WTC11 (cell line): ENCODE measurements at regions of chr12 and their contacts with region 1.

Region 1: GRCh38 chr12:57726151-57726883 is 12.2 kb downstream of the AGAP2 start:
- DNase-seq: peak; percentile 92
- ATAC-seq: peak; percentile 89
- H3K4me3 Mint-ChIP-seq: peak overlapping the region; percentile 94
- H3K27ac Mint-ChIP-seq: no peak overlapping the region
- H3K4me1 Mint-ChIP-seq: peaks cover 15% of the 10 kb centered on the region
- H3K27me3 Mint-ChIP-seq: peaks cover 87% of the 10 kb centered on the region
- CTCF ChIP-seq: peak; percentile 40; the same call in 1 of the 2 replicates

Region 2: DNA sequence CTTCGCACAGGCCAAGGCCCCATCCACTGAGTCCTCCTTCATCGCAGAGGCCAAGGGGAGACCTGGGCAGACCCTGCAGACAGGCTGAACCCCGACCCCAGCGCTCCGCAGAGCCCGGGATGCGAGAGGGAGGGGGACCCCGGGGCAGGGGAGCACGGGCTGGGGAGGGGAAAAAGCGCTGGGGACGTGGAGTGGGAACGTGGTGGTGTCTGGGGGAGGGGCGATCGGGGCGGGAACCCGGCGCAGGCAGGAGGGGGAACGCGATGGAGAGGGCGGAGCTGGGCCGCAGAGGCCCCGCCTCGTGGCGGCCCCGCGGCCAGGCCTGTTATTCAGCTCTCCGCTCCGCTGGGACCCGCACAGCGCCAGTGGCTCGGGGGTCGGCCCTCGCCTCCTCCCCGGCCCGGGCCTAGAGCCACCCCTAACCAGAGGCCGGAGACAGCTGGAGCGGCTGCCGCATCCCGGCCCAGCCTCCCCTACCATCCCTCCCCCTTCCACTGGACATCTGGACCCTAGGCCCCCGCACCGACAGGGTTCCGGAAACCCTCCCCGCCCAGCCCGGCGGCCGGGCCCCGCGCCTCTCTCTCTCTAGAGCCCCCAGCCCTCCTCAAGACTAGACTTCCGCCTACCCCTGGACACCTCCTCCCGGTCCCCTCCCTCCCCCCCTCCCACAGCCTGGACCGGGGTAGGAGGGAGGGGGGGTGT is 115.1 kb before region 1 on chr12 and contains the start of gene ARHGEF25:
- CTCF ChIA-PET with region 1: interaction called, 12 read pairs
- POLR2A ChIA-PET with region 1: no interaction called
- DNase-seq: peak; percentile 73
- ATAC-seq: peak; percentile 67
- H3K4me3 Mint-ChIP-seq: peak within 1 kb of the TSS; percentile 87
- H3K27ac Mint-ChIP-seq: no peak within 1 kb of the TSS
- H3K4me1 Mint-ChIP-seq: peaks cover 36% of the 10 kb centered on the region
- H3K27me3 Mint-ChIP-seq: peaks cover 53% of the 10 kb centered on the region
- CTCF ChIP-seq: no peak
- total RNA-seq, gene ARHGEF25: 11.9 to 19.0 TPM (median 17.2 TPM) in 3 replicates

Region 3: DNA sequence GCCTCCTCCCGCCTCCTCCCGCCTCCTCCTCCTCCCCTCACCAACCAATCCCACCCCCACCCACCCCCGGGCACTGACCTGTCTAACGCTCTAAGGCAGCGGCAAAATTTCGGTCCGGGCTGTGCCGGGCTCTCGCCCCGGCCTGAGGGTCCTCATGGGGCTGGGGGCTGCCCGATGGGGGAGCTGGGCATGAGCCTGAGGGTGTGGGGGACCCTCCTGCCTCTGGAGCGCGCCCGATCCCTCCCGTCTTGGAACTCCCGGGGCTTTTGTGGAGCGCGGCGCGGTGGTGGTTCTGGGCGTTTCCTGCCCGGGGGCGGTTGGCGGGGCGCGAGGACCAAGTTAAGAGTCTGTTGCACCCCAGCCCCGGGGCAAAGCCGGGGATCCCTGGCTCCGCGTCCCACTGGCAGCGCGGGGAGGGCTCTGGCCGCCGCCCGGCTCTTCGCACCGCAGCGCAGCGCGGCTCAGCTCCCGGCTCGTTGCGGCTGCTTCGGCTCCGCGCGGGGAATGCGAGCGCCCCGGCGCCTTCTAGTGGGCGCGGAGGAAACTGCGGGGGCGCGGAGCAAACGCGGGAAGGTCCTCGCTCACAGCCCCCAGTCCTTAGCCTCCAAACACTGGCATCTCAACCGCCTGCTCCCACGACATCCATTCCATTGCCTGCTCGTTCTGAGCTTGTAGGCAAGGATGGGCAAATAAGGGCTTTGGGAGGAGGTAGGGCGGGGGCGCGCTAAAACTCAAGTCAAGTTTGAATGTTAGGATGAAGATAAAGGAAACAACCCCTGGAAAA is 93.4 kb before region 1 on chr12 and contains the start of gene B4GALNT1:
- CTCF ChIA-PET with region 1: interaction called, 17 read pairs
- POLR2A ChIA-PET with region 1: no interaction called
- DNase-seq: peak; percentile 77
- ATAC-seq: peak; percentile 85
- H3K4me3 Mint-ChIP-seq: peak within 1 kb of the TSS; percentile 74
- H3K27ac Mint-ChIP-seq: no peak within 1 kb of the TSS
- H3K4me1 Mint-ChIP-seq: peaks cover 15% of the 10 kb centered on the region
- H3K27me3 Mint-ChIP-seq: peaks cover 80% of the 10 kb centered on the region
- CTCF ChIP-seq: peak; percentile 73
- total RNA-seq, gene B4GALNT1: 0.46 to 1.2 TPM (median 1.2 TPM) in 3 replicates

Region 4: GRCh38 chr12:57744777-57745484 is 18.6 kb after region 1 on chr12 and contains the start of gene TSPAN31:
- CTCF ChIA-PET with region 1: interaction called, 31 read pairs
- POLR2A ChIA-PET with region 1: interaction called, 4 read pairs
- DNase-seq: peak; percentile 93
- ATAC-seq: peak; percentile 86
- H3K4me3 Mint-ChIP-seq: peak within 1 kb of the TSS; percentile 93
- H3K27ac Mint-ChIP-seq: peak within 1 kb of the TSS; percentile 98
- H3K4me1 Mint-ChIP-seq: peaks cover 14% of the 10 kb centered on the region
- H3K27me3 Mint-ChIP-seq: peaks cover 46% of the 10 kb centered on the region
- CTCF ChIP-seq: no peak
- total RNA-seq, gene TSPAN31: 9.9 to 18.6 TPM (median 18.4 TPM) in 3 replicates

Region 5: GRCh38 chr12:57846577-57847319 is 120.4 kb after region 1 on chr12 and contains the start of gene CTDSP2:
- CTCF ChIA-PET with region 1: no interaction called
- POLR2A ChIA-PET with region 1: no interaction called
- DNase-seq: peak; percentile 100
- ATAC-seq: peak; percentile 65
- H3K4me3 Mint-ChIP-seq: peak within 1 kb of the TSS; percentile 69
- H3K27ac Mint-ChIP-seq: peak within 1 kb of the TSS; percentile 95
- H3K4me1 Mint-ChIP-seq: peaks cover 51% of the 10 kb centered on the region
- H3K27me3 Mint-ChIP-seq: peaks cover 14% of the 10 kb centered on the region
- CTCF ChIP-seq: no peak
- total RNA-seq, gene CTDSP2: 97.0 to 122 TPM (median 101 TPM) in 3 replicates